Mammary epithelial cell (primary cell): ENCODE measurements at regions of chr11 and their contacts with region 1.

Region 1: DNA sequence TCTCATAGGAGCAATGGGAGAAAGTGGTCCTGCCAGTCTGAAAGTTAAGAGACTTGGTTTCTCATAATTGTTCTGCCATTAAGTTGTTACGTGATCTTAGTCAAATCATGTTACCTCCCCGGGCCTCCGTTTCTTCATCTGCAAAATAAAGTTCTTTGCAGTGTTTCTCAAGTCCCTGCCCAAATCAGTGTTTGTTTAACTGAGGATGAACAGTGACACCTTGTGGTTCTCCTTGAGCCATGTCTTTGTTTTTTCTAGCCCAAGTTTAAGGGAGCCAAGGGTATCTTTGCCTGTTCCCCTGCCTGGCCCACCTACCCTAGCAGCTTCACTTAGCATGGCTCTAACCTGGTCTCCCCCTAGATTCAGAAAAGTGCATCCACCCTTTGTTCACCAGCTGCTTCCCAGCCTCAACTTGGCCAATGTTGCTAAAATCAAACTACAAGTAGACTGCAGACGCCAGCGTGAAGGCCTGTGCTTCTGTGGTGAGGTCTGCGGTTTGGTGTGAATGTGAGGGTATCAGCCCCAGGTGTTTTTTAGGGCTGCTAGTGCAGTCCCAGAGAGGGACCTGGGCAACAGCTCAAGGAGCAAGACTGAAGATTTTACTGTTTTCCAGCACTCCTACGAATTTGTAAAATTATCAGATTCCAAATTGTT is 35.5 kb downstream of the FZD4 start:
- DNase-seq: peak; percentile 48
- H3K4me3 ChIP-seq: no peak overlapping the region
- H3K27ac ChIP-seq: no peak overlapping the region
- H3K4me1 ChIP-seq: peaks cover 14% of the 10 kb centered on the region
- H3K27me3 ChIP-seq: no peaks in the 10 kb centered on the region
- CTCF ChIP-seq: peak; percentile 55 to 72

Region 2: DNA sequence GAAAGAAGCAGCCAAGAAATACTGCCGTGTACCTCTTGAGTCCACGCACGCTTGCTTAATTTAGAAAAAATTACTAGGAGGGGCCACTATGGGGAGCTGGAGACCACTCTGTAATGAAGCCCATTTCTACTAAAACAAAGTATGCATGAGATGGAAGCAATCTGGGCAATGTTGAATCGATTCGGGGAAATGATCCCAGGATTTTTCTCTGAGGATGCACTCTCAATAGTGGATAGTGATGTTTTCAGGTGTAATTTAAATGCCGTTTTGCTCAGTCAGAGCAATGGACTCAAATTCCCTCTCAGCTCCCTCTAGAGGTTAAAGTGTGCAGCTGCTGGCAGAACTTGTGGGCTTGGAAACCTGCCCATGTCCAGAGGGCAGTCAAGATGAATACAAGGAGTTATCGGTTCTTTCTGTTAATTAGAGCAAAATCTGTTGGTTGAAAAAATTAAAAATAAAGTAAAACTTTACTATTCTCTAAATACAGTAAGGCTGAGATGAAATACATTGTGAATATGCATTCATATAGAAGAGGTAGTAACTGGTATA is 311.4 kb before region 1 on chr11:
- CTCF ChIA-PET with region 1: no interaction called
- dilution Hi-C with region 1: no loop called
- in situ Hi-C with region 1: no loop called
- intact Hi-C with region 1: loop called (anchors 1 kb)
- DNase-seq: peak; percentile 72
- H3K4me3 ChIP-seq: no peak overlapping the region
- H3K27ac ChIP-seq: no peak overlapping the region
- H3K4me1 ChIP-seq: peaks cover 22% of the 10 kb centered on the region
- H3K27me3 ChIP-seq: no peaks in the 10 kb centered on the region
- CTCF ChIP-seq: peak; percentile 89 to 91

Region 3: DNA sequence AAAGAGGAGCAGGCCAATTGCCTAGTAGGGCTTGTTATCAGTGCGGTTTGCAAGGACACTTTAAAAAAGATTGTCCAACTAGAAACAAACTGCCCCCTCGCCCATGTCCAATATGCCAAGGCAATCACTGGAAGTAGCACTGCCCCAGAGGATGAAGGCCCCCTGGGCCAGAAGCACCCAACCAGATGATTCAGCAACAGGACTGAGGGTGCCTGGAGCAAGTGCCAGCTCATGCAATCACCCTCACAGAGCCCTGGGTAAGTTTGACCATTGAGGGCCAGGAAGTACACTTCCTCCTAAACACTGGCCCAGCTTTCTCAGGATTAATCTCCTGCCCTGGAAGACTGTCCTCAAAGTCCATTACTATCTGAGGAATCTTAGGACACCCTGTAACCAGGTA is 70.8 kb before region 1 on chr11:
- CTCF ChIA-PET with region 1: no interaction called
- dilution Hi-C with region 1: loop called (anchors 10 kb)
- in situ Hi-C with region 1: no loop called
- intact Hi-C with region 1: no loop called
- DNase-seq: no peak
- H3K4me3 ChIP-seq: no peak overlapping the region
- H3K27ac ChIP-seq: no peak overlapping the region
- H3K4me1 ChIP-seq: no peaks in the 10 kb centered on the region
- H3K27me3 ChIP-seq: no peaks in the 10 kb centered on the region
- CTCF ChIP-seq: no peak

Region 4: GRCh38 chr11:86869966-86870570 is 49.6 kb before region 1 on chr11:
- CTCF ChIA-PET with region 1: no interaction called
- dilution Hi-C with region 1: loop called (anchors 5 kb)
- in situ Hi-C with region 1: loop called (anchors 5 kb)
- intact Hi-C with region 1: loop called (anchors 1 kb)
- DNase-seq: peak; percentile 19
- H3K4me3 ChIP-seq: no peak overlapping the region
- H3K27ac ChIP-seq: no peak overlapping the region
- H3K4me1 ChIP-seq: peaks cover 6% of the 10 kb centered on the region
- H3K27me3 ChIP-seq: no peaks in the 10 kb centered on the region
- CTCF ChIP-seq: peak; percentile 83 to 86